B cell (primary cell): ENCODE measurements at regions of chr19 and their contacts with region 1.

Region 1: GRCh38 chr19:57389730-57390598 is at the start of gene ZNF548:
- DNase-seq: peak; percentile 99
- ATAC-seq: peak; percentile 99
- H3K4me3 ChIP-seq: peak within 1 kb of the TSS; percentile 65 to 93 (median 89)
- H3K4me3 Mint-ChIP-seq: peak within 1 kb of the TSS; percentile 99
- H3K27ac ChIP-seq: peak within 1 kb of the TSS; percentile 93
- H3K27ac Mint-ChIP-seq: peak within 1 kb of the TSS; percentile 98
- H3K4me1 ChIP-seq: peaks cover 17 to 19% of the 10 kb centered on the region in 2 donors
- H3K4me1 Mint-ChIP-seq: peaks cover 31% of the 10 kb centered on the region
- H3K27me3 ChIP-seq: no peaks in the 10 kb centered on the region
- H3K27me3 Mint-ChIP-seq: no peaks in the 10 kb centered on the region
- CTCF ChIP-seq: peak; percentile 42
- total RNA-seq, gene ZNF548: 83.8 and 85.8 TPM in 2 replicates

Region 2: GRCh38 chr19:57191141-57192076 is 198.6 kb before region 1 on chr19 and contains the start of gene ZNF264:
- CTCF ChIA-PET with region 1: no interaction called
- POLR2A ChIA-PET with region 1: no interaction called
- intact Hi-C with region 1: loop called (anchors 1 kb)
- DNase-seq: peak; percentile 92
- ATAC-seq: peak; percentile 98
- H3K4me3 ChIP-seq: peak within 1 kb of the TSS; percentile 69 to 94 (median 81)
- H3K4me3 Mint-ChIP-seq: peak within 1 kb of the TSS; percentile 92
- H3K27ac ChIP-seq: peak within 1 kb of the TSS; percentile 73 to 81
- H3K27ac Mint-ChIP-seq: peak within 1 kb of the TSS; percentile 96
- H3K4me1 ChIP-seq: peaks cover 20 to 21% of the 10 kb centered on the region in 2 donors
- H3K4me1 Mint-ChIP-seq: peaks cover 25% of the 10 kb centered on the region
- H3K27me3 ChIP-seq: peaks cover 0 to 11% (median 1%) of the 10 kb centered on the region in 4 experiments
- H3K27me3 Mint-ChIP-seq: peaks cover 9% of the 10 kb centered on the region
- CTCF ChIP-seq: no peak
- total RNA-seq, gene ZNF264: 72.4 and 82.6 TPM in 2 replicates

Region 3: GRCh38 chr19:57279418-57280066 is 110.4 kb before region 1 on chr19:
- CTCF ChIA-PET with region 1: no interaction called
- POLR2A ChIA-PET with region 1: no interaction called
- intact Hi-C with region 1: loop called (anchors 1 kb)
- DNase-seq: peak; percentile 92
- ATAC-seq: peak; percentile 73
- H3K4me3 ChIP-seq: peak overlapping the region; percentile 73 to 94 (median 91)
- H3K4me3 Mint-ChIP-seq: no peak overlapping the region
- H3K27ac ChIP-seq: peak overlapping the region; percentile 98 to 100
- H3K27ac Mint-ChIP-seq: no peak overlapping the region
- H3K4me1 ChIP-seq: peaks cover 29 to 33% of the 10 kb centered on the region in 2 donors
- H3K4me1 Mint-ChIP-seq: peaks cover 31% of the 10 kb centered on the region
- H3K27me3 ChIP-seq: no peaks in the 10 kb centered on the region
- H3K27me3 Mint-ChIP-seq: no peaks in the 10 kb centered on the region
- CTCF ChIP-seq: peak; percentile 26

Region 4: GRCh38 chr19:57362997-57363705 is 26.8 kb before region 1 on chr19 and contains the starts of genes TRAPPC2B and ZNF547:
- CTCF ChIA-PET with region 1: interaction called, 3 read pairs
- POLR2A ChIA-PET with region 1: no interaction called
- intact Hi-C with region 1: loop called (anchors 1 kb)
- DNase-seq: peak; percentile 100
- ATAC-seq: peak; percentile 94
- H3K4me3 ChIP-seq: peak within 1 kb of the TSS; percentile 56 to 80 (median 71)
- H3K4me3 Mint-ChIP-seq: peak within 1 kb of the TSS; percentile 95
- H3K27ac ChIP-seq: peak within 1 kb of the TSS; percentile 85 to 97
- H3K27ac Mint-ChIP-seq: peak within 1 kb of the TSS; percentile 97
- H3K4me1 ChIP-seq: peaks cover 10 to 15% of the 10 kb centered on the region in 2 donors
- H3K4me1 Mint-ChIP-seq: peaks cover 17% of the 10 kb centered on the region
- H3K27me3 ChIP-seq: no peaks in the 10 kb centered on the region
- H3K27me3 Mint-ChIP-seq: no peaks in the 10 kb centered on the region
- CTCF ChIP-seq: no peak
- total RNA-seq, gene TRAPPC2B: 9.6 and 12.4 TPM in 2 replicates
- total RNA-seq, gene ZNF547: 9.7 and 9.9 TPM in 2 replicates

Region 5: DNA sequence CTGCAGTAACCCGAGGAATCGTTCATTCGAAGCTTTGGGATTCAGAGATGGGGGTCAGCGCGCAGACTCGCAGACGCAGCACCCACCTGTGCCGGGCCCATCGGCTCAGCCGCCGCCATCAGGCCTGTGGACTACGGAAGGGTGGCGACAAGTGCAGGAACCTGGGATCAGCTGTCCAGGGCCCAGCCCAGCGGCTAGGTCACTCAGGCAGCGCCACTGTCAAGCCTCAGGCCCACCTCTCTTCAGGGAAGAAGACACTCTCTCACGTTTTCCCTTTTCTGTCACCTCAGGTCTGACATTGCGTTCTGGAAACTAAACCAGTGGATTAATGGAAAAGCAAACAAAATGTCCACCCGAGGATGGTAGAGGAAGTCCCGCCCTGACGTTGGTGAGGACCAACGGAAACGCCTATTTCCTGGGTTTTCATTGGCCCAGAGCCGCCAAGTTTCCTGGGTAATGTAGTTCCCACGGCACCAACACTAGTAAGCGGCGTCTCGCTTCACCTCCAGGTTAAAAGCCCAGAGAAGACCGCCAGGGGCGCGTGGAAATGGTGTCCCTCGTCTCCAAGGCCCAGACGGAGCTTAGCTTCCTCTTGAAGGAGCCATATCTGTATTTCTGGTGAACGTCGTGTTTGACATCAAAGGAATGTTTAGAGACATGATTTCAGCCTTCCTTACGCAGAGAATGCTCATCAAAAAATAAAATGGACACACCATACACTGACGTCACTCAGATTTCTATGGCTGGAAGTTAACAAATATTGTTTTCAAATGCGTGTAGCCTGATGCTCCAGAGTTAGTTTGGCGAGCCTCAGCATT is 87.4 kb after region 1 on chr19 and contains the start of gene ZNF772:
- CTCF ChIA-PET with region 1: no interaction called
- POLR2A ChIA-PET with region 1: no interaction called
- intact Hi-C with region 1: loop called (anchors 1 kb)
- DNase-seq: peak; percentile 95
- ATAC-seq: peak; percentile 99
- H3K4me3 ChIP-seq: peak within 1 kb of the TSS; percentile 77 to 91 (median 85)
- H3K4me3 Mint-ChIP-seq: peak within 1 kb of the TSS; percentile 86
- H3K27ac ChIP-seq: peak within 1 kb of the TSS; percentile 65 to 81
- H3K27ac Mint-ChIP-seq: peak within 1 kb of the TSS; percentile 81
- H3K4me1 ChIP-seq: peaks cover 11 to 15% of the 10 kb centered on the region in 2 donors
- H3K4me1 Mint-ChIP-seq: peaks cover 27% of the 10 kb centered on the region
- H3K27me3 ChIP-seq: no peaks in the 10 kb centered on the region
- H3K27me3 Mint-ChIP-seq: peaks cover 10% of the 10 kb centered on the region
- CTCF ChIP-seq: peak; percentile 68
- total RNA-seq, gene ZNF772: 26.2 and 27.4 TPM in 2 replicates

Region 6: GRCh38 chr19:57578487-57579205 is 188.7 kb after region 1 on chr19 and contains the start of gene ZNF416:
- CTCF ChIA-PET with region 1: no interaction called
- POLR2A ChIA-PET with region 1: no interaction called
- intact Hi-C with region 1: loop called (anchors 1 kb)
- DNase-seq: peak; percentile 99
- ATAC-seq: peak; percentile 89
- H3K4me3 ChIP-seq: peak within 1 kb of the TSS; percentile 28 to 90 (median 72)
- H3K4me3 Mint-ChIP-seq: peak within 1 kb of the TSS; percentile 86
- H3K27ac ChIP-seq: peak within 1 kb of the TSS; percentile 46 to 79
- H3K27ac Mint-ChIP-seq: peak within 1 kb of the TSS; percentile 94
- H3K4me1 ChIP-seq: peaks cover 19 to 27% of the 10 kb centered on the region in 2 donors
- H3K4me1 Mint-ChIP-seq: peaks cover 25% of the 10 kb centered on the region
- H3K27me3 ChIP-seq: no peaks in the 10 kb centered on the region
- H3K27me3 Mint-ChIP-seq: no peaks in the 10 kb centered on the region
- CTCF ChIP-seq: no peak
- total RNA-seq, gene ZNF416: 13.0 and 13.9 TPM in 2 replicates